Gastrocnemius medialis (tissue), 4 donors: ENCODE measurements at regions of chr22 and their contacts with region 1.

Region 1: GRCh38 chr22:36398621-36399469 is 11.1 kb upstream of the MYH9 start:
- DNase-seq: no peak
- ATAC-seq: no peak
- H3K4me3 ChIP-seq: no peak overlapping the region
- H3K27ac ChIP-seq: no peak overlapping the region
- H3K4me1 ChIP-seq: no peaks in the 10 kb centered on the region
- H3K27me3 ChIP-seq: no peaks in the 10 kb centered on the region
- CTCF ChIP-seq: no peak
- POLR2A ChIP-seq: no peak

Region 2: GRCh38 chr22:36439481-36440271 is 40.8 kb after region 1 on chr22:
- in situ Hi-C with region 1: loop called in 1 of 4 experiments (anchors 10 kb)
- intact Hi-C with region 1: no loop called
- DNase-seq: no peak
- ATAC-seq: peak in 1 of 2 donors; percentile 36
- H3K4me3 ChIP-seq: no peak overlapping the region
- H3K27ac ChIP-seq: peak overlapping the region in 2 of 4 donors; percentile 5 to 9
- H3K4me1 ChIP-seq: peaks cover 0 to 4% of the 10 kb centered on the region in 2 donors
- H3K27me3 ChIP-seq: no peaks in the 10 kb centered on the region
- CTCF ChIP-seq: no peak
- POLR2A ChIP-seq: no peak

Region 3: GRCh38 chr22:36659762-36660509 is 261.1 kb after region 1 on chr22:
- in situ Hi-C with region 1: no loop called
- intact Hi-C with region 1: no loop called
- DNase-seq: peak; percentile 72 to 94
- ATAC-seq: peak; percentile 89 to 92
- H3K4me3 ChIP-seq: peak overlapping the region in 1 of 4 donors; percentile 7
- H3K27ac ChIP-seq: peak overlapping the region; percentile 39 to 60 (median 49)
- H3K4me1 ChIP-seq: peaks cover 15 to 16% of the 10 kb centered on the region in 2 donors
- H3K27me3 ChIP-seq: peaks cover 0 to 5% (median under 1%) of the 10 kb centered on the region in 3 donors
- CTCF ChIP-seq: no peak
- POLR2A ChIP-seq: no peak